CD14-positive monocyte (primary cell): ENCODE measurements at regions of chr20 and their contacts with region 1.

Region 1: GRCh38 chr20:4108495-4109306 is 93.3 kb upstream of the RNF24 start:
- DNase-seq: peak; percentile 59 to 80 (median 78)
- H3K4me3 ChIP-seq: no peak overlapping the region
- H3K4me3 Mint-ChIP-seq: no peak overlapping the region
- H3K27ac ChIP-seq: no peak overlapping the region
- H3K27ac Mint-ChIP-seq: no peak overlapping the region
- H3K4me1 ChIP-seq: peaks cover 14 to 16% of the 10 kb centered on the region in 2 donors
- H3K4me1 Mint-ChIP-seq: peaks cover 20% of the 10 kb centered on the region
- H3K27me3 ChIP-seq: peaks cover 0 to 6% of the 10 kb centered on the region in 2 donors
- H3K27me3 Mint-ChIP-seq: peaks cover 1 to 7% (median 4%) of the 10 kb centered on the region in 3 donors
- CTCF ChIP-seq: peak; percentile 93

Region 2: DNA sequence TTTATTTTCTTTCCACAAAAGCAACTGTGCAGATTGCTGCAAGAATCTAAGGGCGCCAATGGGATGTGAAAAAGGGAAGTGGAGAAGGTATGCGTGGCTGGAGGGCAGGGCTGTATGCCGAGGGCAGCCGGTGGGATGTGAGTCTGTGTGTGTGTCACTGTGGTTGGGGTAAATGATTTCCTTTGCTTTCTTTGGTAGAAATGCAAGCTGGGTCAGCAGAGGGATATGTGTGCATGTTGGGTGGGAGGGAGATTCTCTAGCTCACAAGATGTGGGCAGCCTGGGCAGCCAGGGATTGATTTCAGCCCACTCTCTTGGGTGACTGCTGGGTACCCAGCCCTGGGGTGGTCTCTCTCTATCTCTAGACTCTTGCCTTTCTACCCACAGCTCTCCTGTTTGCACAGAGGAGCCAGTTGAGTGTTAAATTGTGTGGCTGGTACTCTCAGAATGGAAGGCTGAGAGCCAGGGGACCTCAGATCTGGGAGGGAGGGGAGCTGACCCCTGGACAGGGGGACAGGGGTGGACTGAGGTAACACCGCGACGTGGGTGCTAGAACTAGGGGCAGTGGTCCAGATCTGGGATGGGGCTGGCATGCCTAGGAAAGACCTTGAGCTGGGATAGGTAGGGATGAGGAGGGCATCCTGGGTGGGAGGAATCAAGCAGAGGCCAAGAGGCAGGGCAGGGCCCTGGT is 43.5 kb after region 1 on chr20:
- intact Hi-C with region 1: loop called in 1 of 2 experiments (anchors 5 kb)
- DNase-seq: peak; percentile 76 to 85 (median 81)
- H3K4me3 ChIP-seq: no peak overlapping the region
- H3K4me3 Mint-ChIP-seq: peak overlapping the region; percentile 13 to 77
- H3K27ac ChIP-seq: peak overlapping the region in 1 of 2 donors; percentile 57
- H3K27ac Mint-ChIP-seq: peak overlapping the region; percentile 20 to 81 (median 71)
- H3K4me1 ChIP-seq: peaks cover 44 to 53% of the 10 kb centered on the region in 2 donors
- H3K4me1 Mint-ChIP-seq: peaks cover 52% of the 10 kb centered on the region
- H3K27me3 ChIP-seq: peaks cover 6 to 11% of the 10 kb centered on the region in 2 donors
- H3K27me3 Mint-ChIP-seq: peaks cover 16 to 28% (median 27%) of the 10 kb centered on the region in 3 donors
- CTCF ChIP-seq: no peak

Region 3: GRCh38 chr20:4171538-4172116 is 62.9 kb after region 1 on chr20:
- intact Hi-C with region 1: no loop called
- DNase-seq: no peak
- H3K4me3 ChIP-seq: peak overlapping the region in 1 of 3 experiments; percentile 75
- H3K4me3 Mint-ChIP-seq: peak overlapping the region; percentile 64 to 92
- H3K27ac ChIP-seq: no peak overlapping the region
- H3K27ac Mint-ChIP-seq: peak overlapping the region in 1 of 7 donors; percentile 62
- H3K4me1 ChIP-seq: peaks cover 4 to 10% of the 10 kb centered on the region in 2 donors
- H3K4me1 Mint-ChIP-seq: peaks cover 14% of the 10 kb centered on the region
- H3K27me3 ChIP-seq: peaks cover 0 to 14% of the 10 kb centered on the region in 2 donors
- H3K27me3 Mint-ChIP-seq: peaks cover 18 to 23% (median 21%) of the 10 kb centered on the region in 3 donors
- CTCF ChIP-seq: no peak